Heart right ventricle (tissue), 16 donors: ENCODE measurements at regions of chr5 and their contacts with region 1.

Region 1: GRCh38 chr5:141564216-141564692 is 54.5 kb downstream of the DIAPH1 start:
- DNase-seq: peak in 1 of 2 donors; percentile 86
- ATAC-seq: peak; percentile 39 to 69 (median 57)
- H3K4me3 ChIP-seq: no peak overlapping the region
- H3K27ac ChIP-seq: peak overlapping the region in 9 of 10 donors; percentile 39 to 78 (median 62)
- H3K4me1 ChIP-seq: peaks cover 4 to 51% (median 30%) of the 10 kb centered on the region in 9 donors
- H3K27me3 ChIP-seq: no peaks in the 10 kb centered on the region
- CTCF ChIP-seq: peak; percentile 89 to 99 (median 94)

Region 2: DNA sequence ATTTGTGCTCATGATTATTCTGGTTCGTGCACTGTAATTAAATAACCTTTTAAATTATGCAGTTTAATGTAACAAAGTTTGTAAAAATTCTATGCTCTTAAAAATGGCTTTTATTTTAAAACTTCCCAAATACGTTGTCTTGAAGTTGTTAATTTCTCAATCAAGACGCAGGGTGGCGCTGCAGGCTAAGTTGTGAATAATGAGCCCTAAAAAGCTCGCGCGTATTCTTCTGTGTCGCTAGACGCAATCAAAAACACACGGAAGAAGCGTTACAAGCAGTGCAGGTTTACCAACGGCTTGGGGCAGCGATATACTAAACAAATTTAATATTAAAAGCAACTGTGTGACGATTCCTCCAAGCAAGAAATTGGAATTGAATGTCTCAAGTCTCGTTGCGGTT is 442.7 kb before region 1 on chr5 and contains the start of gene PCDHB4:
- intact Hi-C with region 1: loop called in 1 of 10 experiments (anchors 10 kb)
- DNase-seq: peak in 1 of 2 donors; percentile 45
- ATAC-seq: peak in 1 of 8 donors; percentile 51
- H3K4me3 ChIP-seq: peak within 1 kb of the TSS; percentile 4 to 59 (median 35)
- H3K27ac ChIP-seq: peak within 1 kb of the TSS in 3 of 10 donors; percentile 3 to 55 (median 35)
- H3K4me1 ChIP-seq: no peaks in the 10 kb centered on the region
- H3K27me3 ChIP-seq: peaks cover 0 to 37% (median 19%) of the 10 kb centered on the region in 7 donors
- CTCF ChIP-seq: peak in 8 of 9 donors; percentile 20 to 60 (median 43)
- total RNA-seq, gene PCDHB4: 1.3 to 3.3 (median 2.3) TPM

Region 3: GRCh38 chr5:141245250-141245717 is 319.0 kb before region 1 on chr5 and contains the start of gene PCDHB15:
- intact Hi-C with region 1: loop called in 7 of 10 experiments (anchors 1 to 10 kb)
- DNase-seq: peak in 1 of 2 donors; percentile 37
- ATAC-seq: peak; percentile 20 to 62 (median 46)
- H3K4me3 ChIP-seq: peak within 1 kb of the TSS; percentile 12 to 59 (median 44)
- H3K27ac ChIP-seq: peak within 1 kb of the TSS in 2 of 10 donors; percentile 17 to 60
- H3K4me1 ChIP-seq: no peaks in the 10 kb centered on the region
- H3K27me3 ChIP-seq: peaks cover 0 to 29% (median 13%) of the 10 kb centered on the region in 7 donors
- CTCF ChIP-seq: peak; percentile 15 to 61 (median 47)
- total RNA-seq, gene PCDHB15: 3.3 to 10.5 (median 5.2) TPM

Region 4: DNA sequence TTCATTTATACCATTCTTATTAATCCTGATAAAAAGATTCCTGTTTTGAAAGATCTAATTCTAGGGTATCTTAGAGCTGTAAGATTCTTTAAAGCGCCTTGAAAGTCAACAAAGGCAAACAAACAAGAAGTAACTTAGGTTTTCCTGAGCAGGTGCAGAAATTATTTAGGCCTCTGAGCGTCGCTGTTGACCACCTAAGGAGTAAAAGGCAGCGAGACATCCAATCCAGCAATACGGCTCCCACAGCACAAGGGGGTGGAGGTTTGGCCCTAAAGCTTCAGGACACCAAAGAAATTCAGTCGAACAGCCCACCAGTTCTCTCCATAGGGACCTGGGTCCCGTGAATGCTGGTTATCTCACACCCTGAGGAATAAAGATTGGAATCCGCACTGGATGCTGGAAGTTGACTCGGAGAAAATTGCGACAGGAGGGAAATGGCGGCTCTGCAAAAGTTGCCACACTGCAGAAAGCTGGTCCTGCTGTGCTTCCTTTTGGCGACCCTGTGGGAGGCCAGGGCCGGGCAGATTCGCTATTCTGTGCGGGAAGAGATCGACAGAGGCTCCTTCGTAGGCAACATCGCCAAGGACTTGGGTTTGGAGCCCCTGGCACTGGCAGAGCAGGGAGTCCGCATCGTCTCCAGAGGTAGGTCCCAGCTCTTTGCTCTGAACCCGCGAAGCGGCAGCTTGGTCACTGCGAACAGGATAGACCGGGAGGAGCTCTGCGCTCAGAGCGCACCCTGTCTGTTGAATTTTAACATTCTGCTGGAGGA is 225.5 kb before region 1 on chr5 and contains the start of gene PCDHGA2:
- intact Hi-C with region 1: loop called in 7 of 10 experiments (anchors 5 to 10 kb)
- DNase-seq: peak in 1 of 2 donors; percentile 36
- ATAC-seq: peak; percentile 47 to 81 (median 71)
- H3K4me3 ChIP-seq: peak within 1 kb of the TSS; percentile 5 to 60 (median 46)
- H3K27ac ChIP-seq: peak within 1 kb of the TSS in 9 of 10 donors; percentile 16 to 82 (median 67)
- H3K4me1 ChIP-seq: peaks cover 0 to 4% (median 0%) of the 10 kb centered on the region in 9 donors
- H3K27me3 ChIP-seq: peaks cover 0 to 61% (median 0%) of the 10 kb centered on the region in 7 donors
- CTCF ChIP-seq: peak; percentile 42 to 70 (median 57)
- total RNA-seq, gene PCDHGA2: 7.0 to 15.3 (median 12.2) TPM

Region 5: DNA sequence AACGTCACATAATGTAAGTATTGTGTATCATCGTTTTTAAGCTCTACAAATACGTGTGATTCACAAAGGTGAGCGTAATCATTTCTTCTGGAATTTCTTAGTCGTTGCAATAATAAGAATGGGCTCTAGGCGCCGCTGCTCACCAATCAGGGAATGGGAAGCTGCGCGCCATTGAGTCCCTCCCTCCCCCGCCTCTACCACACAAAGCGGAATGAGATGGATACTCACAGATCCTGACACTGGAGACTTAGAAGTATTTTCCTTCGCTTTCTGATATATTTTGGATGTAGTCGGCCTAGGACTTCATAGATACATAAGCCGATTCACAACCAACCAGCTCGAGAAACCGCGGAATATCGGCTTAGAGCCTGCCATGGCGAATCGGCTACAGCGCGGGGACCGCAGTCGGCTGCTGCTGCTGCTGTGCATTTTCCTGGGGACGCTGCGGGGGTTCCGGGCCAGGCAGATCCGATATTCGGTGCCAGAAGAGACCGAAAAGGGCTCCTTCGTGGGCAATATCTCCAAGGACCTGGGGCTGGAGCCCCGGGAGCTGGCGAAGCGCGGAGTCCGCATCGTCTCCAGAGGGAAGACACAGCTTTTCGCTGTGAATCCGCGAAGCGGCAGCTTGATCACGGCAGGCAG is 143.3 kb before region 1 on chr5 and contains the start of gene PCDHGA11:
- intact Hi-C with region 1: loop called in 8 of 10 experiments (anchors 2 to 10 kb)
- DNase-seq: no peak
- ATAC-seq: peak in 4 of 8 donors; percentile 34 to 60 (median 42)
- H3K4me3 ChIP-seq: peak within 1 kb of the TSS in 9 of 10 donors; percentile 6 to 42 (median 34)
- H3K27ac ChIP-seq: no peak within 1 kb of the TSS
- H3K4me1 ChIP-seq: peaks cover 0 to 25% (median 6%) of the 10 kb centered on the region in 9 donors
- H3K27me3 ChIP-seq: peaks cover 0 to 99% (median 0%) of the 10 kb centered on the region in 7 donors
- CTCF ChIP-seq: peak; percentile 23 to 60 (median 49)
- total RNA-seq, gene PCDHGA11: 3.3 to 8.5 (median 5.4) TPM

Region 6: DNA sequence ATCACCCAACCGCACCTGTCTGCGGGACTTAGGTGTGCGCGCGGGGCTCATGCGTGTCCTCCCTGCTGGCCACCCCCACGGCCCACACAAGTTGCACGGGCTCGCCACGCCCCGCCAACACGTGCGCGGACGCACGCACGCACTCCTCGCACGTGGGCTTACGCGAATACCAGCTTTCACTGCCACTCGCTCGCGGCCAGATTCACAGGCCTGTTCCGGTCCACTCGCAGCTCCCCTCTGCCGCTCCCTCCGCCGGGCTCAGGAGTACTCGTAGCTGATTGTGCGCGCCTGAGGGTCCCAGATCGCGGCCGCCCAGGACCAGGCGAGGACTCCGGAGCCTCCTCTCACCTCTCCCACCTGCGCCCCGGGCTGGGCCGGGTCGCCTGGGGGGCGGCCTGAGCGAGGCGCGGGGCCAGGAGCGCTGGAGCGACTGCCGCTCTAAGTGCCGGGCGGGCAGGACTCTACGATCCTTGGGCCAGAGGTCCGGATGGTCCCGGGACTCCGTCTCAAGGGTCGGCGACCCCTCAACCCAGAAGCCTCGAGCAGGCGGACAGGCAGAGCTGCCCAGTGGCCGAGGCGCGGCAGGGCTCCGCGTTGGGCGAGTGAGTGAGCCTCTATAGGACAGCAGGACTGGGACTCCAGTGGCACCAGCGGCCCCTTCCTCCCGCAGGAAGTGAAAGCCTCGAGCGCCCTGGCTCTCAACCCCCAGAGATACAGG is 71.9 kb before region 1 on chr5:
- intact Hi-C with region 1: no loop called
- DNase-seq: no peak
- ATAC-seq: no peak
- H3K4me3 ChIP-seq: peak overlapping the region in 2 of 10 donors; percentile 4 to 22
- H3K27ac ChIP-seq: peak overlapping the region in 1 of 10 donors; percentile 19
- H3K4me1 ChIP-seq: peaks cover 9 to 60% (median 25%) of the 10 kb centered on the region in 9 donors
- H3K27me3 ChIP-seq: peaks cover 0 to 61% (median 0%) of the 10 kb centered on the region in 7 donors
- CTCF ChIP-seq: no peak

Region 7: GRCh38 chr5:142186857-142187594 is 622.8 kb after region 1 on chr5:
- intact Hi-C with region 1: no loop called
- DNase-seq: no peak
- ATAC-seq: peak in 1 of 8 donors; percentile 18
- H3K4me3 ChIP-seq: no peak overlapping the region
- H3K27ac ChIP-seq: no peak overlapping the region
- H3K4me1 ChIP-seq: peaks cover 0 to 17% (median 5%) of the 10 kb centered on the region in 9 donors
- H3K27me3 ChIP-seq: no peaks in the 10 kb centered on the region
- CTCF ChIP-seq: no peak